ENCODE measurements at regions of chr5 and their contacts with region 1.

Region 1: GRCh38 chr5:43008369-43009153 is 31.6 kb downstream of the ANXA2R start:
- DNase-seq: no peak
- H3K4me3 ChIP-seq: peak overlapping the region; percentile 57
- CTCF ChIP-seq: no peak

Region 2: DNA sequence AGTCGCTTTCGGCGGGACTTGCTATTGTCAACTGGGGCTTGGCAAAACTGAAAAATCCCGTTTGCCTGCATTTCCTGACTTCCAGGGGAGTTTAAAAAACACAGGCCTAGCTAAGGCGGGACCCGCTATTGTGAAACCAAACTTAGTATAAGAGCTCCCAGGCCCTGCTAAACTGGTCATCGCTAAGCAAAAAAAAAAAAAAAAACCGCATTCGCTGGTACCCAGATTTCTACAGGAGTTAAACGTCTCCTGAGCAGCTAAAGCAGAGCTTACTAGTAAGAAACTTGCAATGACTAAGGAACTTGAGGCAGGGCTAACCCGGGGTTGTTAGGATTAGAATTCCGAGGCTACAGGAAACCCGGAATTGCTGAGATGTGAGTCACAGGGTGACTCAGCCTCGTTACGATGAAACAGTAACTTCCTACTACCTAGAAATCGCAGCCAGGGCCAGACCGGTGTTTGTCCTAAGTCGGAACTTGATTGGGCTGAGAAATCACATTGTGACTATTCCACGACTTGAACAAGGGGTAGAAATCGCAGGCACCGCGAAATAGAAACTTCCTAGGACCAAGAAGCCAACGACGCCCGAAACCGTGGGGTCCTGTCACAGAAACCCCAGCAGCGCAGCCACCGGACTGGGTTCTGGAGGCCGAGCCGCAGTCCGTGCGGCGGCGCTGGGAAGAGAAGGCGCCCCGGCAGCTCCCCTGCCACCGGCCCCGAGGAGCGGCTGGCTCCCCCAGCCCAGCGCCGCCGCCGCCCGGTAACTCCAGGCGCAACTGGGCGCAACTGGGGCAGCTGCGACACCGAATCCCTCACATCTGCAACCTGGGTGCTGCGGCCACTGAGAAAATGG is 57.9 kb before region 1 on chr5:
- CTCF ChIA-PET with region 1: interaction called, 3 read pairs
- POLR2A ChIA-PET with region 1: interaction called, 17 read pairs
- DNase-seq: peak; percentile 99
- H3K4me3 ChIP-seq: peak overlapping the region; percentile 64
- CTCF ChIP-seq: no peak

Region 3: DNA sequence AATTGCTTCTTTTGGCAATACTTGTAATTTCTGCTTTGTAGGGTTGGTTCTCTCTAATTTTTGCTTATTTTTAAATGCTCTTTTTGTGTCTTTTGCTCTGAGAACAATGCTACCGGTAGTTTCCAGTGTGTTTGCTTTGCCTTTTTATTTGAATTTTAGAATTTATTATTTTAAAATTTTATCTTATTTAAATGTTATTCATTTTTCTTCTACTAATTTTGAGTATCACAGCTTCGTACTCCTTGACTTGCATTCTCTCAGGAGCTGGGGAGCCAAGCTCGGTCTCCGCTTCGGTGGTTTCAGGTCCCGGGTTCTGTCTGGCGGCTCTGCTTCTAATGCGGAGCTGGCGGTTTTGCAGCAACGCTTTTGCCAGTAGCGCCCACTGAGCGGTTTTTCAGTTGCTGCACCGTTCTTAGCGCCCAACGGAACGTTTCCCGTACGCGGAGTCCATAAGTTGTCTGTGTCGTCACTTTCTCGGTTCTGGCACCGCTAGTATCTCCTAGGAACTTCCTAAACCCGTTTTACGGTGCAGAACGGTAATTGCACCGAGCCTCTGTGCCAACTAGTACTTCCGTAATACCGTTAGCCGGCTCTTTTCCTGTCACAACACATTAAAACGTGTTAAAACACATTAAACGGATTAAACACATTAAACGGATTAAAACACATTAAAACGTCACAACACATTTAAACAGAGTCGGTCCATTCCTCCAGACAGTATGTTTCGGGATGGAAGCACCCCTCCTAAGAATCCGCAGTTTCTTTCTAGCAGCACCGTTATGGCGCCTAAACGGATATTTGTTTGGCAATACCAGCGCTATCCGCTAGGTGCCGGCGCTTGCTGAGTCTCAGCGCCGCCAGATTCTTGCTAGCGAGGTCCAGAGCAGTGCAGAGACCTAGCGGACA is 14.1 kb before region 1 on chr5:
- CTCF ChIA-PET with region 1: interaction called, 52 read pairs
- POLR2A ChIA-PET with region 1: interaction called, 14 read pairs
- DNase-seq: no peak
- H3K4me3 ChIP-seq: peak overlapping the region; percentile 69
- CTCF ChIP-seq: peak; percentile 83

Region 4: DNA sequence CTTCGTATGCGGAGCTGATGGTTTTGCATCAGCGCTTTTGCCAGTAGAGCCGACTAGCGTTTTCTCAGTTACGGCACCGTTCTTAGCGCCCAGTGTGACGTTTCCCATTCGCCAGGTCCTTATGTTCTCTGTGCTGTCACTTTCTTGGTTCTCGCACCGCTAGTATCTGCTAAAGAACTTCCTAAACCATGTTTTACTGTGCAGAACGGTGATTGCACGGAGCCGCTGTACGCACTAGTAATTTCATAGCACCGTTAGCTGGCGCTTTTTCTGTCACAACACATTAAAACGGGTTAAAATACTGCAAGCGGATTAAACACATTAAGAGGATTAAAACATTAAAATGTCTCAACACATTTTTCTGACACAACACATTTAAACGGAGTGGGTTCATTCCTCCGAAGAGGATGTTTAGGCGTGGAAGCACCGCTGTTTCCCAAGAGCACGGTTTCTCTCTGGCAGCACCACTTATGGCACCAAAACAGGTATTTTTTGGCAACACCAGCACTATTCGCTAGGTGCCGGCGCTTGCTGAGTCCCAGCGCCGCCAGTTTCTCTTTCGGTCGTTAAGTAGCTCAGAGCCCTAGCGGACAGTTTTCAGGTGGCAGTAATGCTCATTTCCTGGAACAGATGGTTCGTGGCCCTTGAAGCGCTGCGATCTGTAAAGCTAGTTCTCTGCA is 11.2 kb after region 1 on chr5:
- CTCF ChIA-PET with region 1: interaction called, 10 read pairs
- POLR2A ChIA-PET with region 1: interaction called, 16 read pairs
- DNase-seq: no peak
- H3K4me3 ChIP-seq: peak overlapping the region; percentile 74
- CTCF ChIP-seq: peak; percentile 70

Region 5: GRCh38 chr5:43066799-43067741 is 58.5 kb after region 1 on chr5:
- CTCF ChIA-PET with region 1: interaction called, 13 read pairs
- POLR2A ChIA-PET with region 1: interaction called, 3 read pairs
- DNase-seq: no peak
- H3K4me3 ChIP-seq: peak overlapping the region; percentile 86
- CTCF ChIP-seq: no peak

Measured in AG04449 (cell line).